Posterior vena cava (tissue), 2 donors: ENCODE measurements at regions of chr9 and their contacts with region 1.

Region 1: GRCh38 chr9:104027295-104027694 is 66.8 kb upstream of the SMC2 start:
- DNase-seq: no peak

Region 2: DNA sequence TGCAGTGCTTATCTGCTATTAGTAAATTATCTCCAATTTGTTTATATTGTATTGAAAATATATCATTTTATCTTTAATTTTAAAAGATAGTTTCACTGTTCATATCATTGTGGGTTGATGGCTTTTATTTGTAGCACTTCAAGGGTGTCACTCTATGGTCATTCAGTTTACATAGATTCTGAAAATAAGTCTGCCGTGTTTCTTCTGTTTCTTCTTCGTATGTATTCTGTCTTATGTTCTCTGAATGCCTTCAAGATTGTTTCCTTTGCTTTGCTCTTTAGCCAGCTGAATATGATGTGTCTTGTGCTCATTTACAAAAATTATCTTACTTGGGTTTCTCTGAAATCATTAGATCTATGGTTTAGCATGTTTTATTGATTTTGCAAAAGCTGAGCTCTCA is 672.3 kb before region 1 on chr9:
- intact Hi-C with region 1: no loop called
- DNase-seq: no peak

Region 3: GRCh38 chr9:104093647-104094533 is 66.6 kb after region 1 on chr9 and contains the start of gene SMC2:
- intact Hi-C with region 1: loop called in 1 of 2 experiments (anchors 10 kb)
- DNase-seq: peak; percentile 98
- total RNA-seq, gene SMC2: 5.2 to 9.2 TPM